ENCODE measurements at regions of chr1 and their contacts with region 1.

Region 1: GRCh38 chr1:116372587-116373444 is at the start of gene ATP1A1:
- DNase-seq: peak; percentile 99
- ATAC-seq: peak; percentile 86
- H3K4me3 ChIP-seq: peak within 1 kb of the TSS; percentile 83
- H3K4me1 ChIP-seq: peaks cover 21% of the 10 kb centered on the region
- CTCF ChIP-seq: no peak
- total RNA-seq, gene ATP1A1: 1,136 to 3,461 (median 1,634) TPM

Region 2: DNA sequence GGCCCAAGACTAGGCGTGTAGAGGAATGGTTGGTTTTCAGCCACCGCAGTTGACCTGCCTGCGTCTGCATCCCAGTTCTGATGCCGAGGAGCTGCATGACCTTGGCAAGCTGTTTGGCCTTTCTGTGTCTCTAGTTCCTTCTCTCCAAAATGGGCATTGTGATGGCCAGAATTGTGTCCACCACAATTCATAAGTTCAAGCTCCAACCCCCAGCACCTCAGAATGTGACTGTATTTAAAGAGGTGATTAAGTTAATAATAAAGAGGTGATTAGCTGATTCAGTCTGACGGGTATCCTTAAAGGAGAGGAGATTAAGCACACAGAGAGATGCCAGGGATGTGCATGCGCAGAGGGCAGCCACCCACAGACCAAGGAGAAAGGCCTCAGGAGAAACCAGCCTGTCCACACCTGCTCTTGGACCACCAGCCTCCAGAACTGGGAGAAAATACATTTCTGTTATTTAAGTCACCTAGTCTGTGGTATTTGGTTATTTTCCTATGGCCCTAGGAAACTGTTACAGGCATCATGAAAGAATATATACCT is 233.2 kb before region 1 on chr1:
- intact Hi-C with region 1: loop called in 1 of 2 experiments (anchors 5 kb)
- DNase-seq: no peak
- ATAC-seq: no peak
- H3K4me3 ChIP-seq: no peak overlapping the region
- H3K4me1 ChIP-seq: no peaks in the 10 kb centered on the region
- CTCF ChIP-seq: no peak

Region 3: DNA sequence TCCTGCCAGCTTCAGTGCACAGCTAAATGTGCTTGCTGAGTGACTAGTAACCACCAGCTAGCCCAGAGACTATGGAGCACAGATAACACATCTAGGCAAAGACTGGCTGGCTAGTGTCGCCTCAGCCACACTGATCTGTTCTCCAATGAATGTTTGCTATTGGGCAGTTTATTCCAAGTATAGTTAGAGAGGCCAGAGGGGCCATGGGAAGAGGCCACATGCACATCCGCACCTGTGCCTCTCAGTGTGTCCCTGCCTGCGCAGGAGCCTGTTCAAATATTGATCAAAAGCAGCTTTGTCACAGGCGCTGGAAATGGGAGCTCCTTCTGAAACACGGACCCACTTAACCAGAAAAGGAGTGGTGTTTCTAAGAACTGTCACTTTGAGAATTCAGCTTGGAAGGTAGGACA is 51.0 kb before region 1 on chr1:
- intact Hi-C with region 1: no loop called
- DNase-seq: peak in 1 of 3 donors; percentile 45
- ATAC-seq: peak; percentile 48
- H3K4me3 ChIP-seq: no peak overlapping the region
- H3K4me1 ChIP-seq: peaks cover 46% of the 10 kb centered on the region
- CTCF ChIP-seq: no peak

Measured in mucosa of descending colon (tissue), 3 donors.